SK-N-SH (cell line): ENCODE measurements at regions of chrX and their contacts with region 1.

Region 1: DNA sequence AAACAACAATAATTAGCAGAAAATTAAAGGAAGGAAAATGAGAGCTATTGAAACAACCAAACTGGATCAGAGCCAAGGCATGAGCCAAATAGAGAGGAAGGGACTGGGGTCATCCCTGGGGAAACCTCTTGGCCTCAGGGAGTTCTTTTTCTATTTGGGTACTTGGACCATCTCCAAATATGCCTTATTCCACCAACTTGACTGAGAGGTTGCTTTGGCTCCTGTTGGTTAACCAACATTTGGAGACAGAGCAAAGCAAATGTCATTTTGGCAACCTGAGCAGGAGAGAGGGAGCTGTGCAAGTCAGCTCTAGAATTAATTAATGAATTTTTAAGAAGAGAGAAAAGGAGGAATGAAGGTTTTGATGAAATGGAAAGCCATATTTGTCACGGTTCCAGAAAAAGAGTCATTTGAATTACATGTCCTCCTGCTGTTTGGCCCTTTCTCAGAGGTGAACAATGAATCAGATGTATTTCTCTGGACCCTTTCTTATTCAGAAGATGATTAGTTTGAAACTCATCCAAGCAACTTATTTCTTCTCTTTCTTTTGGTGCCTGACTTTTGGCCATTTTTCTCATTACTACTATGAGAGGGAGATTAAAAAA is 119.1 kb downstream of the CNKSR2 start:
- DNase-seq: no peak
- H3K4me3 ChIP-seq: no peak overlapping the region
- H3K27ac ChIP-seq: no peak overlapping the region
- H3K4me1 ChIP-seq: no peaks in the 10 kb centered on the region
- H3K27me3 ChIP-seq: no peaks in the 10 kb centered on the region
- CTCF ChIP-seq: no peak
- EP300 ChIP-seq: no peak
- RAD21 ChIP-seq: no peak

Region 2: DNA sequence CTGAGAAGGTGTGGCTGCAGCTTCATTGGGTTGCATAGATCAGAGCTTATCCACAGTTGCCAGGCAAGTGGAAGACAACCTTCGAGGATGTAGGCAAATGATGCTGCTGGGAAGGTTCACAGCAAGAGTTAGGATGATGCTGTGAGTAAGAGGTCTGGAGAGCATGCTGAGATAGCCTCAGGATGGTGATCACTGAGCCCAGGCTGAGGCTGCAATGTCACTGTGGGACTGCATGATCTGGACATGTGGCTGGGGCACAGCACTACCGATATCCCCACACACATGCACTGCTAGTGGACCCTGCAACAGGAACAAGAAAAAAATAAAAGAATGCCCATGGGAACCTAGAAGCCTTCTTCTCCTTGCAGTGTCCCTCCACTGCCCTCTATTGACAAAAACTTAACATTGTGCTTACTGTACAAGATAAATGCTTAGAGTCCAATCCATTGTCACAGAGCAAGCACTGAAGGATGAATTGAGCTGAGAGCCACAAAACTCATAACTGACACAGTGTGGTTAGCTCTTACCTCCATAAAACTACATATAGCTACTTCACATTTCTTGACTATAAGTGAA is 13.5 kb before region 1 on chrX:
- CTCF ChIA-PET with region 1: interaction called, 13 read pairs
- POLR2A ChIA-PET with region 1: no interaction called
- DNase-seq: peak; percentile 33
- H3K4me3 ChIP-seq: no peak overlapping the region
- H3K27ac ChIP-seq: no peak overlapping the region
- H3K4me1 ChIP-seq: peaks cover 0 to 2% of the 10 kb centered on the region in 2 experiments; a peak in 1 of 4 replicates
- H3K27me3 ChIP-seq: no peaks in the 10 kb centered on the region
- CTCF ChIP-seq: peak; percentile 72
- EP300 ChIP-seq: no peak
- RAD21 ChIP-seq: peak; percentile 81